ENCODE measurements at regions of chr3 and their contacts with region 1.

Region 1: DNA sequence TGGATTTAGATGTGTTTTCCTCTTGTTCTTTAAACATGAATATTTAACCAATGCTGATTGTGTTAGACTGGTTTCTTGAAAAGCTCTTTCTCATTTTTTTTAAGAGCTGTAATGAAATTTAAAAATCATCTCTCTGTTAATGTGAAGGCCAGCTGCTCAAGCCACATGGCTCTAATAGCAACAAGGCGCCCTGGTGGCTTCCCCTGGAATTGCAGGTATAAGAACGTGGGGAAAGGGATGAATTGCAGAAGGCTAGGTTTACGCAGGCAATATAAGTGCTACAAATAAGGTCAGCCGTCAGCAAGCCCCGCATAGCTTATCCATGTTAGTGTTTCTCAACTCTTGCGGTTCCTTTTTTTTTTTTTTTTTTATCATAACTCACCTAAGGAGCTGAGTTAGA is 108.5 kb downstream of the SAMMSON start:
- DNase-seq: no peak
- ATAC-seq: peak; percentile 66
- H3K4me3 ChIP-seq: no peak overlapping the region
- H3K27ac ChIP-seq: no peak overlapping the region
- H3K4me1 ChIP-seq: no peaks in the 10 kb centered on the region
- H3K27me3 ChIP-seq: no peaks in the 10 kb centered on the region
- CTCF ChIP-seq: peak; percentile 34 to 78 (median 76)
- EP300 ChIP-seq: no peak
- POLR2A ChIP-seq: no peak
- RAD21 ChIP-seq: peak; percentile 60; the same call in 1 of the 2 replicates

Region 2: DNA sequence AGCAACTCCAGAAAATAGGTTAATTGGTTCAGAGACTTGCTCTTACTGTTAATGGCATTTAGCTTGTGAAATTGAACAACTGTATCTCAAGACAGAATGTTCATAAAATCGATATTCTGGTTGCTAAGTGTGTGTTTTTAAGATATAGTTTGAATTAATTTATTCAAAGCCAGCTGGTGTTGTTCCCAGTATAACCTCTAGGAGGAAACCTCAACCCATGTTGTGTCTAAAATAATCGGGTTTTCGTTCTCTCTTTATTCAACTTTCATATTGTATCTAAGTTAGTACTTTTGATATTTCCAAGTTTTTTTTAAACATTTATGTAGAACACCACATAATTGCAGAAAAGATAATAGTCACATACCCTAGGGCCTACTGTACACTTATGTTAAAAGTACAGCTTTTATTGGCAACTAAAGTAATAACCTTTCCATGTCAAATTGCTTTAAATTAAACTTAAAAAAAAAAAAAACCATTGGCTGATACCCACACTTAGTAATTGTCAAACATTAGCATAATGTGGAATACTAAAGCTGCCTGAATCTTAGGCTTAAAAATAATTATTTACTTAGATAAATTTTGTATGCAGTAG is 17.7 kb before region 1 on chr3:
- CTCF ChIA-PET with region 1: interaction called, 10 read pairs
- POLR2A ChIA-PET with region 1: no interaction called
- RAD21 ChIA-PET with region 1: no interaction called
- SMC1A ChIA-PET with region 1: interaction called, 9 read pairs
- in situ Hi-C with region 1: no loop called
- intact Hi-C with region 1: no loop called
- DNase-seq: no peak
- ATAC-seq: 0 out of 3 replicates have a peak, but pooled peaks have one; percentile 35
- H3K4me3 ChIP-seq: no peak overlapping the region
- H3K27ac ChIP-seq: no peak overlapping the region
- H3K4me1 ChIP-seq: no peaks in the 10 kb centered on the region
- H3K27me3 ChIP-seq: no peaks in the 10 kb centered on the region
- CTCF ChIP-seq: peak; percentile 45 to 67 (median 56); a peak in 5 of 6 replicates
- EP300 ChIP-seq: no peak
- POLR2A ChIP-seq: no peak
- RAD21 ChIP-seq: peak; percentile 77

Measured in GM12878 (cell line).